GM10248 (cell line): ENCODE measurements at regions of chr18 and their contacts with region 1.

Region 1: GRCh38 chr18:58135701-58136331 is 91.8 kb downstream of the NEDD4L start:
- DNase-seq: peak; percentile 79
- CTCF ChIP-seq: peak; percentile 85

Region 2: GRCh38 chr18:57881818-57882413 is 253.9 kb before region 1 on chr18:
- CTCF ChIA-PET with region 1: interaction called, 10 read pairs
- POLR2A ChIA-PET with region 1: no interaction called
- DNase-seq: peak; percentile 62
- CTCF ChIP-seq: peak; percentile 86

Region 3: DNA sequence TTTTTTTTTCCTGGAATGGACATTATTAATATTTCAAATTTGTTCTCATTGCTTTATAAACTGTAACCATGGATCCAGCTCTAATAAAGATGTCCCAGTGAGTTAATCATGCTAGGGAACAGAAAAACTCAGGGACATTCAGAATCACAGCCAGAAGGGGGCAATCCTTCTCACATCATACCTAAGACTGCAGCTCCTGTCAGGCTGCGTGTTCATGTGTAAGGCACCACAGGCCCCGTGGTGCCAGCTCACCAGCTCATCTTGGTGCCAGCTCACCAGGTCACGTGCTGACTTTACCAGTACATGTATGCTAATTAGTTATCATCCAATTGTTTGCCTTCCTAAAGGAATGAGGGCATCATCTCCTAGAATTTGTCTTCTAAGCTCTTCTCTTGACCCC is 176.5 kb before region 1 on chr18:
- CTCF ChIA-PET with region 1: interaction called, 10 read pairs
- POLR2A ChIA-PET with region 1: no interaction called
- DNase-seq: peak; percentile 48
- CTCF ChIP-seq: peak; percentile 34

Region 4: DNA sequence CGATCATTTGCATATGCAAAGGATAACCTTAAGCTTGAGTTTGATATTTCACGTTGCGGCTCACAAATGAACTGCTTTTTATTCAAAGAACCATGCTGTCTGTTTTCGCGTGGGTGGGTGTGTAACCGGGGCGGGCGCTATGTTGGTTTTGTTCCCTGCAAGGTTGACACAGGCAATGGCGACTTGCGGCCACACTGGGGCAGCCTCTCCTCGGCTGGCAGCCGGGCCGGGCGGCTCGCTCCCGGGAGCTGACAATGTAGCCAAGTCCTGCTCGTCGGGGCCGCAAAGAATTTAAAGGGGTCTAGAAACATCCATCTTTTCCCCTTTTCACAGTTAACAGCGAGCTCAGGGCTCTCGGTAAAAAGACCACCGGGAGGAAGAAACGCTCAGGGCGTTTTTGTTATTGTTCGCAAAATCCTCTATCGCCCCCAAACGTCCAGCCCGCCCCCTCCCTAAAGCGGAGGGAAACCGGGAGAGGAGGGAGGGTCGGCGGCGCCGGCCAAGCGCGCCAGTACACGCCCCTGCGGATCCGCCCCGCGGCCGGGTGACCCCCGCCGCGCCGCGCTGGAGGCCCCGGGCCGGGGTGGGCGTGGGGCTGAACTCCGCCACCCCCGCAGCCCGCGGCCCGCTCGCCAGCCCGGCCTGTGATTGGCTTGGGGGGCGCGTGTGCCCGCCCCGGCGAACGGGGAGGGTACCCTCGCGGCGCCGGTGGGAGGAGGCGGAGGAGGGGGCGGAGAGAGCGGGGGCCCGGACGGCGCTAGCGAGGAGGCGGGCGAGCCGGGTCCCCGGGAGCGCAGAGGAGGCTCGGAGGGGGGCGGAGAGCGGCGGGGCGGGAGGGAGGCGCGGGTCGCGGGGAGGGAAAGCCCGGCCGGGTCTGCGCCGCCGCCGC is 92.1 kb before region 1 on chr18 and contains the start of gene NEDD4L:
- CTCF ChIA-PET with region 1: interaction called, 39 read pairs
- POLR2A ChIA-PET with region 1: no interaction called
- DNase-seq: peak; percentile 87
- CTCF ChIP-seq: peak; percentile 73

Region 5: DNA sequence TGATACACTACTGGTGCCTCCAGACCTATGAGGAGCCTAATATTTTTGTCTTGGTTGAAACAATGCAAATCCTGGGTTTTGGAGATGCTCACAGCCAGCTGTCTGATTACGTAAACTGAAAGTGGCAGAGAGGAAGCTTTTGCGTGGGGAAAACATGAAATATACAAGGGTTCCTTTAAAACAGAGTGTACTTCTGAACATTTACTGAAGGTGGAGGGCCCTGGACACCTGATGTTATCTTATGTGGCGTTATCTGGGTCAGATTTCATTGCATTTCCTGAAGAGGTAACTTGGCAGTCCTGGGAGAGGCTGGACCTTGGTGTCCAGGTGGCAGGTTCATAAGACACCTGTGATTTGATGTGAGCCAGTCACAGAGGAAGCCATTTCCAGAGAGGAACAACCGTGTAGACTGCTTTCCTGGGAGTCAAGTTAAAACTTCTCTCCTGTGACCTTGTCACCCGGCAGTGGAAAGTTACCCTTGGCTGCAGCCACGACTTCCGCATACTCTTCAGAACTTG is 13.2 kb after region 1 on chr18:
- CTCF ChIA-PET with region 1: interaction called, 21 read pairs
- POLR2A ChIA-PET with region 1: no interaction called
- DNase-seq: no peak
- CTCF ChIP-seq: no peak

Region 6: DNA sequence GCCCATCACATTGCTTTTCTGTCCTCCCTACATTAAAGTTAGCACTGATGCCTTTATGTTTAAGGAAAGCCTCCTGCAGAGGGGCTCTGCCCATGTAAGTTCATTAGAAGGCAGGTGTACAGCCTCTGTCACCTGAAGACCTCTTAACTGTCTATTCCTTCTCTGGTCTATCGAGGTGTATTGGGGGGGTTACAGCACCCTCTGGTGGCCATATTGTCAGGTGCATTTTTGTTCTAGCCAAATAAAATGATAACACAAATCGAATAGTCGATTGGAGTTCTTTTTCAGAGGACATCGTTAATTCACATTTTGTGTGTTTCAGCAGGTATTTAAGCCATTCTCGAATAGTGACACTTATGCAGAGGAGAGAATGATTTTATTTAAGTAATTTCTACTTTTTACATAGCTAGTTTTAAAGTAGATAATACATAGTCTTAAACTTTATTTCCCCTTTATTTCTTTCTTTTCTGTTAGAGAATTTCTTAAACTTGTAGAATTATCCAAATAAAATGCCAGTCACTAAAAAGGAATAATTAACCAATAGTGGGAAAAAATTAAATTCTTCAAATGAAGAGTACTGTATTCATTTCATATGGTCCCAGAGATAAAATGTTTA is 45.0 kb after region 1 on chr18:
- CTCF ChIA-PET with region 1: interaction called, 10 read pairs
- POLR2A ChIA-PET with region 1: no interaction called
- DNase-seq: peak; percentile 75
- CTCF ChIP-seq: peak; percentile 82